ENCODE measurements at regions of chr2 and their contacts with region 1.

Region 1: GRCh38 chr2:30686000-30686399 is 121.2 kb downstream of the CAPN13 start:
- DNase-seq: no peak

Region 2: GRCh38 chr2:30584116-30584515 is 101.9 kb before region 1 on chr2:
- intact Hi-C with region 1: loop called (anchors 5 kb)
- DNase-seq: no peak